ENCODE measurements at regions of chr1 and their contacts with region 1.

Region 1: DNA sequence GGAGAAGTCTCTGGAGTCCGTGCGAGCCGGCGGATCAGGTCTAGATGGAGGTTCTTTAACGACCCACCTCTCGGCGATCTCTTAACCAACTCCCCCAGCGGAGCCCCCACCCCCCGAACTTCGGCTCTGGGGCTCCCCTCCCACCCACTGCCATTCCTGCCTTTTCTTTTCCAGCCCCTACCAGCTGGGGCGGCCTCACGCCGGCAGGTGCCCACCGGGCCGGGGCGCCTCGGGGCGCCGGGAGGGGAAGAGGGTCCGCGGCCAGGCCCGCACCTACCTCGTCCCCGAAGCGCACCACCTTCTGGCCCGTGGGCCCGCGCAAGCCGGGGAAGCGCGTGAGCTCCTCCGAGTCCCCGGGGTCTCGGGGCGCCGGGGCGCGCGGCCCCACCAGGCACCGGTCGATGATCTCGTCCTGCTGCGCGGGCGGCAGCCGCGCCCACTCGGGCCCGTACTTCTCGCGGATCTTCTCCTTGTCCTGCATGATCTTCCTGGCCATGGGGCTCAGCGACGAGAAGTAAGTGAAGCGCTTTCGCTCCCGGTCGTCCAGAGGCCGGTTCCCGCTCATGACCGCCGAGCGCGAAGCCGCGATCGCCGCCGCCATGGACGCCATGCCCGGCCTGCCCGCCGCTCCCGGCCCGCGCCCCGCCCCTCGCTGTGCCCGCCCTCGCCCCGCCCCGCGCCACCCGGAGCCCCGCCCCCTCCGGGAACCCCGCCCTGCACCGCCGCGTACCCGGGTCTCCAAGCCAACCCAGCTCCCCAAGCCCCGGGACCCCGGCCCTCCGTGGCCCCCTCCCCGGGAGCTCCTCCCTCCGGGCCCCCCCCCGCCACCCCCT is at the start of gene C1orf198:
- DNase-seq: peak; percentile 89
- total RNA-seq, gene C1orf198: 79.5 to 98.4 TPM

Region 2: DNA sequence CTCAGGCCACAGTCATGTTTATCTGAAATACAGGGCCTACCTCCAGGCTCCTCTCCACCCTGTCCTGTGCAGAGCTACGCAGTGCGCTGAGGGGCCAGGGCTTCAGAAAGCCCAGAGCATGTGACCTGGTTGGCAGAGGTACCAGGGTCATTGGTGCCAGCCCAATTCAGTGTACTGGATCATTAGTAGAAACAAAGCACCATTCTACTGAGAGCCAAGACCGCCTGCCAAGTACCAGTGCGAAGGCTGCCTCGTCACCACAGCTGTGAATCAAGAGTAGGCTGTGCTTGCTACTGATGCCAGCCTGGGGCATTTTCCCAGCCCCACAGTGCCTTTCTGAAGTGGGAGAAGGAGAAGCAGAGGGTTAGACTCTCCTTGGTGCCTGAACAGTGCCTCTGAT is 61.1 kb before region 1 on chr1:
- intact Hi-C with region 1: loop called in 1 of 2 experiments (anchors 10 kb)
- DNase-seq: no peak

Region 3: DNA sequence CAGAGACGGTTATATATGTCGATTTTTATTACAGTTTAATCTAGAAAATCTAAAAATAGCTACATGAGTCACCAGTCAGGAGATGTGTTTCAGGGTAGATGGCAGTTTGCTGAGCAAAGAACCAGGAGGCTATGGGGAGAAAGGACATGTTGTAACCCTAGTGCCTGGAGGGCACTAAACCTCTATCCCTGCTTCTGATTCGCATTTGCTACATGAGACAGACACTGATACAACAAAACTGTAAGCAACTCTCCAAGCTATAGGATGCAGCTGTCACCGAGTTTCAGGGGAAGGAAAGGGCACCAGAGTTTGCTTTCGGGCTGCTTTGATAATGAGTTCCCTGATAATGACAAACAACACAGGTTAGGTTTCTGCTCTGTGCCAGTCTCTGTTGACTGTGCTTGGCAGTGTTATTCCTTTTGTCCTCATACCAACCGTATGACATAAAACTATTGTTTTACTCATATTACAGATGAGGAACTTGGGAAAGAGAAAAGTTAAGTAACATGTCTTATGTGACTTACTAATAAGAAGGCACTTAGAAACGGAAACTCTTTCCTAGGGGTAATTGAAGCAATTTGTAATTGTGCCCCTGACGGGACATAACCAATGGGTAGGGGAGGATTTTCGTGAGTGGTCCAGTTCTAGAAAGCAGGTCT is 42.9 kb before region 1 on chr1:
- intact Hi-C with region 1: loop called in 1 of 2 experiments (anchors 5 kb)
- DNase-seq: no peak

Region 4: DNA sequence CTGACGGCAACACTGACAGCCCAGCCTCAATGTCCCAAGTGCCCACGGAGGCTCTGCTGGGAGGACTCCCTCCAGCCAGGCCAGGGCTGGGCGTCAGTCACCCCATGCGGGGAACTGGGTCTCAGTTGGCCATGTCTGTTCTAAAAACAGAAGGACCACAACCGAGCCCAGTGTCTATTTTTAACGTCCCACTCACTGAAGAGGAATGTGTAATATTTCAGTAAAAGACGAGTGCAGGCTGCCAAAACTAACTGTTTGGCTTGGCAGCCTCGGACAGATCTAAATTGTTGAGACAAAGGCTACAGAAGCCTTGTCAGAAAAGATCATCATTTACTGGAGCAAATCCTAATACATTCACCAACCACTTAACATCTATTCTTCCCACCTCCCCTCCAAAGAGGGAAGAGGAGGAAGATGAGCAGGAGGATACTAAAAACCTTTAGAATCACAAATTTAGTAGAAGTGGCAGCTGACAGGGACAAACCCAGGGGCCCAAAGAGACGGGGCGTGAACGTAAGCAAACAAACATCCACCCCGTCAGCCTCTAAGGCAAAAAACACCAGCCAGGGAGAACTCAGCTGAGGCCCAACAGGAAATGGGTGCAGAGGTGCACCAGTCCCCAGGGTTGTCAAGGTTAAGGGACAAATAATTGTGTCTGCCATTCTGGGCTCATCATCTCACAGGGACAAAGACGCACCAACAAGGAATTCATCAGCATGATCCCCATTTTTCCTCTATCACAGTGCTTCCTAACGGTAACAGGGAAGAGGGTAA is 18.5 kb before region 1 on chr1:
- intact Hi-C with region 1: no loop called
- DNase-seq: peak; percentile 90